Activated T-helper 1 cell treated with anti-CD3 and anti-CD28 coated beads, Interleukin-12 subunit alpha, Interleukin-12 subunit beta, Interleukin-2, Interleukin-4 antibody, amounts not matched to agents 30 ng/mL and 10 ng/mL and 1 ng/mL, durations not matched to agents 14 hours and 24 hours and 36 hours (primary cell): ENCODE measurements at regions of chr9 and their contacts with region 1.

Region 1: DNA sequence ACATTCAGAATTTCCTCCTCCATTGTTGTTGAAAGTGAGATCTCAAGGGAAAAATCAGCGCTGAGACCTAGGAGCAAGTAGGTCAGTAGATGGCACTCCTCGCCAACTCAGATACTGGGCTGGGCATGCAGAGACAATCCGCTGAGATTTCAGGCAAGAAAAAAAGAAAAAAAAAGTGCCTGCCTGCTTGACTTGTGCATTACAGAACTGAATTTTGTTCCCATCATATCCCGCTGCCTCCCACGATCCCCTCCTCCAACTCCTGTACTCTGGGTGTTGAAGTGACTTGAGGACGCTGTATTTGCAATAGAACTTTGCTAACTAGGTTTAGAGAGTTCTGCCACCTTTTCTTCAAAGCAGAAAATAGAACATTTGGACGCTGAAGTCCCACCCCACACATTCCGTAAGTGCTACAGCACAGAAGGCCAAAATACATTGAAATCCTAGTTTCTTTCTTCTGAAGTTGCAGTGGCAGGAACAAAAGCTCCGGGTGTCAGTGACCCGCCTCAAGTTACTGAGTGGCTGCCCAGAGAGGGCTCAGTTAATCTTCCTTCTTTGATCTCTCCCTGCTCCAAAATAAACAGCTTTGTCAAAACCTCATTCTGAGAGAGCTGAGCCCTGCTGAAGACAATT is 265.8 kb downstream of the MLLT3 start:
- DNase-seq: peak; percentile 29
- H3K4me3 Mint-ChIP-seq: no peak overlapping the region
- H3K27ac Mint-ChIP-seq: peak overlapping the region; percentile 40
- H3K4me1 Mint-ChIP-seq: peaks cover 86% of the 10 kb centered on the region
- H3K27me3 Mint-ChIP-seq: no peaks in the 10 kb centered on the region

Region 2: GRCh38 chr9:19946441-19947109 is 409.9 kb before region 1 on chr9:
- intact Hi-C with region 1: loop called (anchors 5 kb)
- DNase-seq: no peak
- H3K4me3 Mint-ChIP-seq: no peak overlapping the region
- H3K27ac Mint-ChIP-seq: no peak overlapping the region
- H3K4me1 Mint-ChIP-seq: peaks cover 22% of the 10 kb centered on the region
- H3K27me3 Mint-ChIP-seq: peaks cover 13% of the 10 kb centered on the region

Region 3: DNA sequence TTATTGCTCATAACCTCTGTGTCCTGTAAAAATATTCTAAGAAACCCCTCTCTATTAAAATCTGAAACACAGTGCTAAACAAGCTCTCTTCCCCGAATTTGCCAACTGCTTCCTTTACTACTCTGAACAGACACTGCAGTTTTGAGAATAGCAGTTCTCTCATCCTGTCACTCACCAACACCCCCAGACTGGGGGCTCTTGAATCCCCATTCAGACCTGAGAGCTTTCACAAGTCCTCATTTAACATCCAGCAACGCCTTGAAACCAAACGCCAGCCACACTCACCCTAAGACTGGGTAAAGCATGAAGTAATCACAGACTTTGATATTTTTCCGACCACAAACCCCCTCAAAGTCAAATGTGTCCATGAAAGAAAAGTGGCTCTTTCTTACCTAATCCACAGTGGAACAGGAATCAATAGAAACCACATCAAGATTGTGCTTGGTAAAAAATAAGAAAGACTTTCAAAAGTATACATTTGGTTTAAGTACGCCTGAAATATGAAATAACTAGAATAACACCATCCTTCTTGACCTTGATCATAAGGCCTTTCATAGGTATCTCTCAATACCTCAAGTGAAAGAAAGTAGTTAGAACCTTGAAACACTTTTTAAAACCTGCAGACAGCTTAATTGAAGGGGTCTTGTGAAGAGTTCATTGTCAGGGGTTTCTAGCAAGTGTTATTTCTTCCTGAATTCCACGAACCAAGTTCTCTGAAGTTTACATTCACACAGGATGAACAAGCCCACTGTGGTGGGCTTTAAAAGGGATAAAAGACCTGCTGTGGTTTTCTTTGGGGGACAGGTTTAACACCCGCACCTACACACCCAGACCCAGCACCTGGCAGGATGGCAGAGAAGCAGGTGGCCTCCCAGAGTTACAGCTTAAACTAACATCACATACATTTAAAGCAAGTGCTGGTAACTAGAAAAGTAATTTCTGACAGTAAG is 146.9 kb before region 1 on chr9:
- intact Hi-C with region 1: loop called (anchors 1 kb)
- DNase-seq: peak; percentile 62
- H3K4me3 Mint-ChIP-seq: peak overlapping the region; percentile 25
- H3K27ac Mint-ChIP-seq: peak overlapping the region; percentile 89
- H3K4me1 Mint-ChIP-seq: peaks cover 39% of the 10 kb centered on the region
- H3K27me3 Mint-ChIP-seq: no peaks in the 10 kb centered on the region

Region 4: DNA sequence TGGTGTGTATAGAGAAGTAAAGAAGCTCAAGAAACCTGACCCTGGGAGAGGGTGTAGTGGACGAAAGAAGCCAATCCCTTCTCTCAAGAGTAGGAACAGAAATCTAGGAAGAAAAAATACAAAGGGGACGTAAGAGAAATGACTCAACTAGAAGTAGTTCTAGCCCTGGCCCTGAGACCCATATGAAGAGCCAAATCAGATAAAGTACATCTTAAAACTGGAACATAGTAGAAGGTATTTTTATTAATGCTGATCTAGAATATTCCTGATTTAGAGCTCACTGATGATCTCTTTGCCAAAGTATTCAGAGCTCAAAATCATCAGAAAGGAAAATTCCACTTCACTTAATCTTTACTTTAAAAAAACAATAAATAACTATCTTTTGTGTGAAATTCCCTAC is 81.0 kb after region 1 on chr9:
- intact Hi-C with region 1: loop called (anchors 5 kb)
- DNase-seq: no peak
- H3K4me3 Mint-ChIP-seq: no peak overlapping the region
- H3K27ac Mint-ChIP-seq: no peak overlapping the region
- H3K4me1 Mint-ChIP-seq: peaks cover 30% of the 10 kb centered on the region
- H3K27me3 Mint-ChIP-seq: no peaks in the 10 kb centered on the region

Region 5: DNA sequence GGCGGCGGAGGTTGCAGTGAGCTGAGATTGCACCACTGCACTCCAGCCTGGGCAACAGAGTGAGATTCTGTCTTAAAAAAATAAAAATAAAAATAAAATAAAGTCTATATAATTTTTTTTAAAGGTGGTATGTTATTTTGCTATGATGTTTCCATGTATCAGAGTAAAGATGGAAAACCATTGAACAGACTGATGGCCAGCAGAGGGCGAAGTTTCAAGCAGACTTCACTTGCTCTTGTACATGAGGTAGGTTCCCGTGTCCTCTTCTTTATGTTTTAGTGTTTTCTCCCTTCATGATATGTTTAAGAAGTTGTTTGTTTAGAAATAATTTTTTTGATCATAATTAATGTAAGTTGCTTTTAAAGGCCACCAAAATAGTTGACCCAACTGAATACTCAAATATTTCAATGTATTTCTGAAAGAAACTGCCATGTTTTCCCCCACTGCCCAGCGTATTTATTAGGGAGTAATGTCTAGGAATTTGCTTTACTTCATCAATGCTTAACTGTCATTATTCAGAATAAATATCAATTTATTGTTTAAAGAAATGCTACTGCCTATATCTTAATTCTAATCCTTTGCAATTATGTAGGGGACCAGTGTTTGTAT is 528.6 kb after region 1 on chr9:
- intact Hi-C with region 1: loop called (anchors 5 kb)
- DNase-seq: peak; percentile 12
- H3K4me3 Mint-ChIP-seq: no peak overlapping the region
- H3K27ac Mint-ChIP-seq: no peak overlapping the region
- H3K4me1 Mint-ChIP-seq: no peaks in the 10 kb centered on the region
- H3K27me3 Mint-ChIP-seq: no peaks in the 10 kb centered on the region

Region 6: DNA sequence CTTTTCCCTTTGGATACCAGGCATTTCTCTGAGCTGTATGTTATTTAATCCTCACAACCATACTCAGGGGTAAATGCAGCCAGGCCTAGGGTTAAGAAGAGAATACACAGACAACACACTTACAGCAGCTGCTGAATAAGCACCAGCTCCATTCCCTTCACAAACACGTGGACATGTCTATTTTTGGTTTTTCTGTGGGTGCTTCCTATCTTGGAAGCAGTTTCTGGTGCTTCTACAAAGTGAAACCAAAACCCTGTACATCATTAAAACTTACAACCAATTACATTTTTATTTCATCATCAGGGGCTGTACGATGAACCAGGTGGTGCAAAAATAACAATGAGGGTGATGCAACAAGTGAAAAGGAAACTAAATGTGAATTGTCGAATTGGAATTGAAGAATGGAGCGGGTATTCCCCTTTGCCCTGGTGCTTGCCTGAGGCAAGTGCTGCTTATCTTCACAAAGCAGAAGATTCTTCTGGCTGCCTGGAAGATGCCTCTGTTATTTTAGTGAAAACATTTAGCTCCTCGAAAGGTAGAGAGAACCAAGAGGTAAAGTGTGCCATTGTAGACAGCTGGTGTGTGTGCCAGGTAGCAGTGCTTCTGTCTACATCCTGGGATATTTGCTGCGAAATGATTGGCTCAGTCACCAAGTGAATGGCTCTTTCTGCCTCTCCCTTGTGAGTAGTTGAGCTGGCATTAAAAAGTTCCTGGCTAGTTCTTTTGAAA is 739.8 kb after region 1 on chr9:
- intact Hi-C with region 1: loop called (anchors 1 kb)
- DNase-seq: peak; percentile 38
- H3K4me3 Mint-ChIP-seq: peak overlapping the region; percentile 54
- H3K27ac Mint-ChIP-seq: peak overlapping the region; percentile 56
- H3K4me1 Mint-ChIP-seq: peaks cover 35% of the 10 kb centered on the region
- H3K27me3 Mint-ChIP-seq: no peaks in the 10 kb centered on the region